Ovary (tissue), 10 donors: ENCODE measurements at regions of chr12 and their contacts with region 1.

Region 1: DNA sequence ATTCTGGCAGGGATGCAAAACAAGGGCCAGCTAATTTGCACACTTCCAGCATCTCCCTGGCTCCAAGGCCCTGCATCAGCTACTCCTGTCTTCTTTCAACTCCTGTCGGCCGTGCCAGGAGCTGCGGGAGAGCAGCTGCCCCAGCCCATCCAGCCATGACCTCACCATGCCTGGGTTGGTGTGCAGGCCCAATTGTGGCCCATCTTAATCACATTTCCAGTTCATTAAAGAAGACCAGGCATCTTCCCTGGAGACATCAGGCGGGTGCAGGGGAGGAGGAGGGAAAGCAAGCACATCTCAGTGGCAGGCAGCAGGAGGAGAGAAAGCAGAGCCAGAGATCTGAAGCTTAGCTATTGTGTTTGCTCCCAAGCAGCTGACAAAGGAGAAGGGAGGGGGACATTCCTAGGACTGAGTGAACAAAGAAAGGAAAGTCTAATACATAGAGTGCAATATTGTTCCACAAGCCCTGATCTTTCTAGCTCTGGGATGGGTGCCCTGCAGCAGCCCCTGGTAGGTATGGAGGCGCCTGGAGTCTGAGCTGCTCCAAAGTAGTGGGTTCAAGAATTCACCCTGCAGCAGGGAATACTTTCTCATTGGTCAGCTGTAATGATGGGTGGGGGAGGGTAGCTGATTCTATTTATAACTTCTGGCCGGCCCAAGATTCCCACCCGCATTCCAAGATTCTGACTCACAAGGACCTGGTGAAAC is 40.1 kb downstream of the VWF start:
- DNase-seq: no peak
- H3K4me3 ChIP-seq: no peak overlapping the region
- H3K27ac ChIP-seq: no peak overlapping the region
- H3K4me1 ChIP-seq: peaks cover 2% of the 10 kb centered on the region
- H3K27me3 ChIP-seq: no peaks in the 10 kb centered on the region
- CTCF ChIP-seq: no peak
- EP300 ChIP-seq: no peak
- POLR2A ChIP-seq: no peak

Region 2: DNA sequence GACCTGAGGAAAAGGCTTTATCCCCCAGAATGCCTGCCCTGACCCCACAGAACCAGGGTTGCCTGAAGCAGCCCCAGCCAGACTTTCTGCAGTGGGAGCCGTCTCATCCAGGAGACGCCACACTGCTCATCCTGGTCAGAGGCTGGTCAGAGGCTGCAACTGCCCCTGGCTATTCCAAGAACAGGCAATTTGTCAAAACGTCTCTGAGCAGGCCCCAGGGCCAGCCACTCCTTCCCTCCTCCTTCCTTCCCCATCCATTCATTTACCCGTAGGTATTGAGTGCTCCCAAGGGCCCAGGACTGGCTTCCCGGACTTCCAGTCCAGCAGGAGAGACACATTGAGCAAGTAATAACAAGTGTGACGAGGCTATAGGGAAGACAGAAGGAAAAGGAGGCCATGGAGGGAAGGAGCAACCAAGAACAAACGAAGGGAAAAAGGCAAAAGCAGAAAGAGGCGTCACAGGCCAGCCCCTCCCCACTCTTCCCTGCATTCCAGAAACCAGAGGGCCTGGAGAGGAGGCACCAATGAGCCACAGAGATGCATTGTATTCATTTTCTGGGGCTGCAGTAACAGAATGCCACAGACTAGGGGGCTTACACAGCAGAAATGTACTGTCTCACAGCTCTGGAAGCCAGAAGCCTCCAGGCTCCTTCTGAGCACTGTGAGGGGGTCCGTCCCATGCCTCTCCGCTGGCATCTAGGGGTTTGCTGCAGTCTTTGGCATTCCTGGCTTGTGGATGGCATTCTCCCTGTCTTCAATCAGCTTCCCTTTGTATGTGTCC is 94.8 kb after region 1 on chr12:
- intact Hi-C with region 1: loop called in 1 of 4 experiments (anchors 10 kb)
- DNase-seq: peak in 1 of 5 donors; percentile 23
- H3K4me3 ChIP-seq: no peak overlapping the region
- H3K27ac ChIP-seq: peak overlapping the region in 1 of 2 donors; percentile 15
- H3K4me1 ChIP-seq: peaks cover 19% of the 10 kb centered on the region
- H3K27me3 ChIP-seq: no peaks in the 10 kb centered on the region
- CTCF ChIP-seq: no peak
- EP300 ChIP-seq: no peak
- POLR2A ChIP-seq: no peak